IMR-90 (cell line): ENCODE measurements at regions of chr17 and their contacts with region 1.

Region 1: GRCh38 chr17:67717624-67718329 is at the start of gene NOL11:
- DNase-seq: peak; percentile 98
- ATAC-seq: peak; percentile 98
- H3K4me3 ChIP-seq: peak within 1 kb of the TSS; percentile 64
- H3K27ac ChIP-seq: peak within 1 kb of the TSS; percentile 81
- H3K4me1 ChIP-seq: peaks cover 2% of the 10 kb centered on the region; the same call in 1 of the 2 replicates
- H3K27me3 ChIP-seq: no peaks in the 10 kb centered on the region
- CTCF ChIP-seq: peak; percentile 99
- POLR2A ChIP-seq: peak; percentile 91
- RAD21 ChIP-seq: peak; percentile 56
- total RNA-seq, gene NOL11: 58.3 and 78.6 TPM in 2 replicates

Region 2: GRCh38 chr17:68470961-68471360 is 753.2 kb after region 1 on chr17:
- CTCF ChIA-PET with region 1: no interaction called
- POLR2A ChIA-PET with region 1: no interaction called
- dilution Hi-C with region 1: no loop called
- in situ Hi-C with region 1: no loop called
- intact Hi-C with region 1: loop called (anchors 10 kb)
- DNase-seq: no peak
- ATAC-seq: no peak
- H3K4me3 ChIP-seq: no peak overlapping the region
- H3K27ac ChIP-seq: no peak overlapping the region
- H3K4me1 ChIP-seq: peaks cover 2% of the 10 kb centered on the region; the same call in 1 of the 2 replicates
- H3K27me3 ChIP-seq: peaks cover 2% of the 10 kb centered on the region; the same call in 1 of the 2 replicates
- CTCF ChIP-seq: no peak
- POLR2A ChIP-seq: no peak
- RAD21 ChIP-seq: no peak